Activated B cell treated with CpG ODN at 0.5 μM for 24 hours (primary cell): ENCODE measurements at regions of chr3 and their contacts with region 1.

Region 1: GRCh38 chr3:112376996-112377395 is 44.0 kb downstream of the CD200 start:
- DNase-seq: no peak
- ATAC-seq: peak; percentile 71
- H3K4me3 Mint-ChIP-seq: no peak overlapping the region
- H3K27ac Mint-ChIP-seq: no peak overlapping the region
- H3K4me1 Mint-ChIP-seq: peaks cover 56% of the 10 kb centered on the region
- H3K27me3 Mint-ChIP-seq: no peaks in the 10 kb centered on the region
- CTCF ChIP-seq: no peak

Region 2: GRCh38 chr3:112128843-112129727 is 247.9 kb before region 1 on chr3:
- CTCF ChIA-PET with region 1: no interaction called
- POLR2A ChIA-PET with region 1: no interaction called
- intact Hi-C with region 1: no loop called
- DNase-seq: peak; percentile 39
- ATAC-seq: peak; percentile 73
- H3K4me3 Mint-ChIP-seq: peak overlapping the region; percentile 6
- H3K27ac Mint-ChIP-seq: peak overlapping the region; percentile 82
- H3K4me1 Mint-ChIP-seq: peaks cover 91% of the 10 kb centered on the region
- H3K27me3 Mint-ChIP-seq: no peaks in the 10 kb centered on the region
- CTCF ChIP-seq: no peak

Region 3: DNA sequence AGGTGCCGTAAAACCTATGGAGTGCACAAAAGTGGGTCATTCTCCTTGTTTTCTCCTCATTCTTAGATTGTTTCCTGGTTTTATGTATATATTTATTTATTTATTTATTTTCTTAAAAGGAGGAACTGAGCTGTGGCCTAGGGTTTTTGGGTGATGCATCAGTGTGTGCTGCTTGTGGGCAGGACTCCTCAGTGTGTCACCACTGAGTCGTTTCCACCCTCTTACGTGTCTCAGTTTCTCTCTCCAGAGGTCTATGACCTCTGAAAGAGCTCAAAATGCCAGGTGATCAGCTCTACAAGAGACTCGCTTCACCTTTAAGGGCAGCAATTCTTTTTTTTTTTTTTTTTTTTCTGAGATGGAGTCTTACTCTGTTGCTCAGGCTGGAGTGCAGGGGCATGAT is 28.8 kb after region 1 on chr3:
- CTCF ChIA-PET with region 1: interaction called, 3 read pairs
- POLR2A ChIA-PET with region 1: no interaction called
- intact Hi-C with region 1: loop called (anchors 5 kb)
- DNase-seq: no peak
- ATAC-seq: no peak
- H3K4me3 Mint-ChIP-seq: no peak overlapping the region
- H3K27ac Mint-ChIP-seq: peak overlapping the region; percentile 68
- H3K4me1 Mint-ChIP-seq: peaks cover 31% of the 10 kb centered on the region
- H3K27me3 Mint-ChIP-seq: no peaks in the 10 kb centered on the region
- CTCF ChIP-seq: no peak

Region 4: DNA sequence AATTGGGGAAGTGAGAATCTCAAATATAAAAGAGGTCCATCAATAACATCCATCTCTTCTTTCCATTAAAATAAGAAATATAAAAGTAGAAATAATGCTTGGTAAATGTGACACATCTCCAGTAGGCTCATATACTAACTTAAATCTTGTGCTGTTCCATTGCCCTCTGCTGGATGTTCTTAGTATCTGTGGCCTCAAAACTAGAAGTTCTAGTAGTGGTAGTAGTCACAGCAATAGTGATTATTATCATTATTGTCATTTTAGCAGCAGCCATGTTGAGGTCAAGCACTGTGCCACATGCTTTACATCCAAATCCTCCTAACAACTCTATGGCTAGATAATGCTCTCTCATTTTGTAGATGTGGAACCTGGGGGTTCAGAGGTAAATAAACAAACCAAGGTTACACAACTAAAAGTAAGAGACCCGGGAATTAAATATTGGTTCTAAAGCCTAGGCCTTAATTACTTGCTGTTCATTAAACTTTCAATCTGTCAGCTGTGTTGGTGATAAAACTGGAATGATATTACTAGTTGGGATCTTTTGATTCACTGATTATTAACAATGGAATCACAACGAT is 142.5 kb after region 1 on chr3:
- CTCF ChIA-PET with region 1: no interaction called
- POLR2A ChIA-PET with region 1: no interaction called
- intact Hi-C with region 1: no loop called
- DNase-seq: no peak
- ATAC-seq: peak; percentile 75
- H3K4me3 Mint-ChIP-seq: peak overlapping the region; percentile 58
- H3K27ac Mint-ChIP-seq: peak overlapping the region; percentile 89
- H3K4me1 Mint-ChIP-seq: peaks cover 41% of the 10 kb centered on the region
- H3K27me3 Mint-ChIP-seq: no peaks in the 10 kb centered on the region
- CTCF ChIP-seq: no peak